Dendritic cell treated with granulocyte-macrophage colony-stimulating factor and Interleukin-4, amounts not matched to agents 40 ng/mL and 50 ng/mL, for 4 days (primary cell): ENCODE measurements at regions of chr13 and their contacts with region 1.

Region 1: DNA sequence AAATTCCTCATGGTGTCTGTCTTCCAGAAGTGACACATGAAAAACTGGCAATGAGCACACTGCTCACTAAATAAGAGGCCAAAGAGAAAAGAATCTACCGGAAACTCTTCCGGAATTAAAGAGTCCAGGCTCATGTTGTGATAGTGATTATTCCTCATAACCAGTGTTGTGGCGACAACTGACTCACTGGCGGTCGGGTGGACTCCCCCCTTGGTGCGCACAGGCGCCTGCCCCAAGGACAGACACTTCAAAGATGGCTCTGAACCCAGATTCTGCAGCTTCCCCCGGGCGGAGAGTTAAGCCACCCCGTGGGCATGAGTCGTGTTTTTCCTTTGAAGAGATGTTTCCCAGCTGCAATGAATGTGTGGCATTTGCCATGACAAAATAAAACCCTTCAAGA is 10.3 kb downstream of the IL17D start:
- H3K4me3 Mint-ChIP-seq: no peak overlapping the region
- H3K27ac Mint-ChIP-seq: no peak overlapping the region
- H3K4me1 Mint-ChIP-seq: peaks cover 9% of the 10 kb centered on the region
- H3K27me3 Mint-ChIP-seq: peaks cover 28% of the 10 kb centered on the region

Region 2: GRCh38 chr13:20773194-20774080 is 59.7 kb after region 1 on chr13 and contains the start of gene EEF1AKMT1:
- intact Hi-C with region 1: loop called (anchors 5 kb)
- H3K4me3 Mint-ChIP-seq: peak within 1 kb of the TSS; percentile 87
- H3K27ac Mint-ChIP-seq: peak within 1 kb of the TSS; percentile 92
- H3K4me1 Mint-ChIP-seq: peaks cover 14% of the 10 kb centered on the region
- H3K27me3 Mint-ChIP-seq: no peaks in the 10 kb centered on the region

Region 3: DNA sequence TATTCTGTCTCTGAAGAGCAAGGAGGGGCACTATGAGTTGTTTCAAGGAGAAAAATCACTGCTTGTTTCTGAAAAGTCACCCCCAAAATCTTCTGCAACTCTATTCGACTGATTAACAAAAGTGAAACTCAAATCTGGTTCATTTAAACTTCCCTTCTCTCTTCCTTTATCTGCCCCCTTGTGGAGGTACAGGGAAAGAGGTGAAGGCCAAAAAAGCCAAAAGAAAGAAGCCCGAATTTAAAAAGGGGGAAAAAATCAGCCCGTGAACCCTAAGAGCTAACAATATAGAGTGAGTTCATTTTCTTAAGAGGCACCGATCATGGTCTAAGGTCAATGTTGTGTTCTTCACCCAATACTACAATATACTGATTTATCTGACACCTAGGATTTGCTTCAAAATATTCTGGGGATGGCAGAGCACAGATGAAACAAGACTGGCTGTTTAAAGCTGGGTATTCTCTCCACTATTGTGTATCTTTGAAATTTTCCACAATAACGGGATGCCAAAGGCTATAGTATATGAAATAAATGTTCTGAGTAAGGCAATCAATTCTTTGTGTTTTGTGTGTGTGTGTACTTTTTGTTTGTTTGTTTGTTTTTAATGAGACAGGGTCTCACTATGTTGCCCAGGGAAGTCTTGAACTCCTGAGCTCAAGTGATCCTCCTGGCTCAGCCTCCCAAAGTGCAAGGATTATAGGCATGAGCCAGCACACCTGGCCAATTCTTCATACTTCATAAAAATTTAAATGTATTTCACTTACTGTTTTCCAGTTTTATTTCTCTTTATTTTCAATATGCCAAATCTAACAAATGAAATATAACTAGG is 115.0 kb after region 1 on chr13:
- intact Hi-C with region 1: loop called (anchors 5 kb)
- H3K4me3 Mint-ChIP-seq: peak overlapping the region; percentile 34
- H3K27ac Mint-ChIP-seq: no peak overlapping the region
- H3K4me1 Mint-ChIP-seq: peaks cover 6% of the 10 kb centered on the region
- H3K27me3 Mint-ChIP-seq: no peaks in the 10 kb centered on the region

Region 4: GRCh38 chr13:20924758-20925394 is 211.1 kb after region 1 on chr13:
- intact Hi-C with region 1: loop called (anchors 2 kb)
- H3K4me3 Mint-ChIP-seq: no peak overlapping the region
- H3K27ac Mint-ChIP-seq: no peak overlapping the region
- H3K4me1 Mint-ChIP-seq: no peaks in the 10 kb centered on the region
- H3K27me3 Mint-ChIP-seq: no peaks in the 10 kb centered on the region